RWPE1 (cell line): ENCODE measurements at regions of chr2 and their contacts with region 1.

Region 1: DNA sequence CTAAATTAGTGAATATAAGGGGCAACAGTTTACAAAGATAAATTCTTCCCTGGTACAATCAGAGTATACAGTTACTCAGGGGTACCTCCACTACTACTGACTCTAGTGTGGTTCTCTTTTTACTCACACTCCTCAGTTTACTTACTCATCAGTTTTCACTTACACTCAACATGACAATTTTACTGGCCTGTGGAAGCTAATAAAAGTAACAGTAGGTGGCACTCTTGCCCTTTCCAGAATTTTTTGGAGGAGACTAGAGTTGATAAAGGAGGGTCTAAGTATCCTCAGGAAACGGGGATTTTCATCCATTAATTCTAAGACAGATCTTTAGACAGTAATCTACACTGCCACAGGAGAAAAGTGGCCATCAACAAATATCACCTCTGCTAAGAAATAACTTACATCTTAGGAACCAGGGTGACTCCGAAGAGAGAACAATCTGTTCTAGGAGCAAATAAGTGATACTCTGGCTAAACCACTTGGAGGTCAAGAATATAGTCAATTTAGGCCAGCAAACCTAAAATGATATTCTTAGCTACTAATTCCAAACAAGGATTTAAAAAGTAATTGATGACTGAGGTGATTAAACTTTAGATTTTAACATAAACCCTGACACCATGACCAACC is 61.3 kb downstream of the ATL2 start:
- DNase-seq: peak; percentile 31
- H3K27ac ChIP-seq: no peak overlapping the region
- CTCF ChIP-seq: peak; percentile 80

Region 2: DNA sequence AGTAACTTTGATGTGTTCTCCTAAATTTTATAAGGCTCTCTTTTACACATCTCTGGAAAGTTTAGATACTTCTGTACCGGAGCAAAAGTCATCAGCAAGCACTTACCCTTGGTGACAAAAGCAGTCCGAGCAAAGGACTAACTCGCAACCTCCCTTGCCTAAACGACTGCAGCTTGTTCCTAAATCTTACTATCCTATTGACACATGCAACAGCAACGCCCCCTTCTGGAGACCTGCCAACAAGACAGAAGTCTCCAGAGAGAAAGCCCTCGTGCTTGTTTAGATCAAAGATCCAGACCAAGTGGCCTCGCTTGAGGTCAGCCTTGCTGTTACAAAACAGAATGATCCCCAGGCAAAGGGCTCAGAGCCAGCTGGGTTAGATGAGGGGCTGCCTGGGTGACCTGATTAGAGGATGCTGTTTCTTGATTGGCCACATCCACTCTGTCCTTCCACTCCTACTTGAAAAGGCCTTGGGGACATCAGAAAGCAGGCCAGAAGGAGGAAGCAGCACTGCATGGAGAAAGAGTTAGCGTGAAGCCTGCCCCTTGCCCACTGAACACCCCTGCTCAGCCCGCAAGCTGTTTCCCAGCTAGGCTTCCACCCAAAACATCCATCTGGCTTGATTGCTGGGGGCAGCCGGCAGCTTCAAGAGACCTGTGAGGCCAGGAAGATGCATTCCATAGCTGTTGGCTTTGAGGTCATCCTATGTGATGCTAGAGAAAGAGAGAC is 192.7 kb after region 1 on chr2:
- CTCF ChIA-PET with region 1: interaction called, 27 read pairs
- POLR2A ChIA-PET with region 1: no interaction called
- DNase-seq: peak; percentile 56
- H3K27ac ChIP-seq: 0 out of 2 replicates have a peak overlapping the region, but pooled peaks have one; percentile 21
- CTCF ChIP-seq: peak; percentile 42